Ovary (tissue), 10 donors: ENCODE measurements at regions of chr20 and their contacts with region 1.

Region 1: GRCh38 chr20:8853805-8854338 is 215.0 kb upstream of the PLCB4 start:
- DNase-seq: peak in 1 of 5 donors; percentile 29
- H3K4me3 ChIP-seq: no peak overlapping the region
- H3K27ac ChIP-seq: peak overlapping the region in 1 of 2 donors; percentile 57
- H3K4me1 ChIP-seq: peaks cover 6% of the 10 kb centered on the region
- H3K27me3 ChIP-seq: no peaks in the 10 kb centered on the region
- CTCF ChIP-seq: peak; percentile 70 to 78 (median 77)
- EP300 ChIP-seq: no peak
- POLR2A ChIP-seq: no peak

Region 2: GRCh38 chr20:9068851-9069663 is 215.2 kb after region 1 on chr20 and contains the start of gene PLCB4:
- intact Hi-C with region 1: loop called in 1 of 4 experiments (anchors 10 kb)
- DNase-seq: peak in 4 of 5 donors; percentile 20 to 50 (median 24)
- H3K4me3 ChIP-seq: peak within 1 kb of the TSS; percentile 49
- H3K27ac ChIP-seq: peak within 1 kb of the TSS; percentile 33 to 46
- H3K4me1 ChIP-seq: peaks cover 2% of the 10 kb centered on the region
- H3K27me3 ChIP-seq: no peaks in the 10 kb centered on the region
- CTCF ChIP-seq: no peak
- EP300 ChIP-seq: no peak
- POLR2A ChIP-seq: no peak
- total RNA-seq, gene PLCB4: 2.8 to 11.8 (median 5.6) TPM